ENCODE measurements at regions of chr1 and their contacts with region 1.

Region 1: DNA sequence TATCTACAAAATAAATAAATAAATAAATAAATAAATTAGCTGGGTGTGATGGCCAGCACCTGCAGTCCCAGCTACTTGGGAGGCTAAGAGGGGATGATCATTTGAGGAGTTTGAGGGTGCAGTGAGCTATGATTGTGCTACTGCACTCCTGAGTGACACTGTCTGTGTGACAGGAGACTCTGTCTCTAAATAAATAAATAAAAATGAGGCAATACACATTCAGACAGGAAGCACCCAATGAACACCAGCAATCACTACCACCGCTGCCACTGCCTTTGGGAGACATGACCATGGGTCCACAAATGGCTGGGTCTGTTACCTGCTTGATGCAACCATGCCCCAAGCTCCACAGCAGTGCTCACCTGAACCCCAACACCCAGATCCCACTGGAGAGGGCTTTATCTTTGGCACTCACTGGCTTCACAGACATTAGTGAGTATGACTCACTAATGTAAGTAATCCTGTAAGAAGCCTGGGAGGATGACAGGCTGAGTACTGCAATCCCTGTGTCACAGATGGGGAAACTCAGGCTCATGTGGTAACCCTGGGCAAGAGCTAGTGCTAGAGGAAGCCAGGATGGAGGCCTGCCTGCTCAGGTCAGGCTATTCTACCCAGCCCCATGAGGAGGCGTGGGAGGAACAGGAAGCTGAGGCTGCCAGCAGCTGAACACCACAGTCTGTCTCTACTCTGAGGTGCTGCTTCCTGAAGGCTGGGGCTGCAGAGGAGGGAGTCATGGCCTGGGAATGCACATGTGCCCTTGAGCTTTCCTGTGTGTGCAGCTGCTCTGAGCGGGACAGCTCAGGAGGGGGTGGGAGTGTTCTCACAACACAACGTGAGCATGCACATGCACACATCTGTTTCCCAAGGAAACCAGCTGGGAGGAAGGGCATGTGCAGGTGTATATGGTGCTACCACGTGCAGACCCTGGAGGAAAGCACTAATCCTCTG is 43.0 kb downstream of the SLC9A1 start:
- DNase-seq: peak; percentile 41 to 87 (median 72)
- ATAC-seq: peak; percentile 96
- H3K4me3 ChIP-seq: no peak overlapping the region
- H3K4me3 Mint-ChIP-seq: peak overlapping the region; percentile 69
- H3K27ac ChIP-seq: peak overlapping the region; percentile 1 to 78
- H3K27ac Mint-ChIP-seq: peak overlapping the region; percentile 92
- H3K4me1 ChIP-seq: peaks cover 45% of the 10 kb centered on the region
- H3K4me1 Mint-ChIP-seq: peaks cover 64% of the 10 kb centered on the region
- H3K27me3 ChIP-seq: no peaks in the 10 kb centered on the region
- H3K27me3 Mint-ChIP-seq: no peaks in the 10 kb centered on the region
- CTCF ChIP-seq: peak; percentile 49

Region 2: DNA sequence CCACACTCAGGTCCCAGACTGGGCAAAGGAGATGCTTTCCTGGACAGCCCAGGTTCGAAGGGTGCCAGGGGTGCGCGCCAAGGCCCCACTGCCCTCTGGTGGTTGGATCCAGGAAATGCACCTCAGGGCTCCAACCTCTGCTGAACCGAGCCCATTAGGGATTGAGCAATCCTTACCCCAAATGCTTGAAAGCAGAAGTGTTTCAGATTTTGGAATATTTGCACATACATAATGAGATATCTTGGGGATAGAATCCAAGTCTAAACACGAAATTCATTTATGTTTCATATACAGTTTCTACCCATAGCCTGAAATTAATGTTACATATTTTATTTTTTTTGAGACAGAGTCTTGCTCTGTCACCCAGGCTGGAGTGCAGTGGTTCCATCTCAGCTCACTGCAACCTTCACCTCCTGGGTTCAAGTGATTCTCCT is 14.4 kb before region 1 on chr1:
- CTCF ChIA-PET with region 1: interaction called, 38 read pairs
- POLR2A ChIA-PET with region 1: no interaction called
- intact Hi-C with region 1: no loop called
- DNase-seq: peak; percentile 47 to 83 (median 73)
- ATAC-seq: peak; percentile 100
- H3K4me3 ChIP-seq: no peak overlapping the region
- H3K4me3 Mint-ChIP-seq: no peak overlapping the region
- H3K27ac ChIP-seq: no peak overlapping the region
- H3K27ac Mint-ChIP-seq: no peak overlapping the region
- H3K4me1 ChIP-seq: no peaks in the 10 kb centered on the region
- H3K4me1 Mint-ChIP-seq: peaks cover 3% of the 10 kb centered on the region
- H3K27me3 ChIP-seq: no peaks in the 10 kb centered on the region
- H3K27me3 Mint-ChIP-seq: no peaks in the 10 kb centered on the region
- CTCF ChIP-seq: peak; percentile 90

Region 3: DNA sequence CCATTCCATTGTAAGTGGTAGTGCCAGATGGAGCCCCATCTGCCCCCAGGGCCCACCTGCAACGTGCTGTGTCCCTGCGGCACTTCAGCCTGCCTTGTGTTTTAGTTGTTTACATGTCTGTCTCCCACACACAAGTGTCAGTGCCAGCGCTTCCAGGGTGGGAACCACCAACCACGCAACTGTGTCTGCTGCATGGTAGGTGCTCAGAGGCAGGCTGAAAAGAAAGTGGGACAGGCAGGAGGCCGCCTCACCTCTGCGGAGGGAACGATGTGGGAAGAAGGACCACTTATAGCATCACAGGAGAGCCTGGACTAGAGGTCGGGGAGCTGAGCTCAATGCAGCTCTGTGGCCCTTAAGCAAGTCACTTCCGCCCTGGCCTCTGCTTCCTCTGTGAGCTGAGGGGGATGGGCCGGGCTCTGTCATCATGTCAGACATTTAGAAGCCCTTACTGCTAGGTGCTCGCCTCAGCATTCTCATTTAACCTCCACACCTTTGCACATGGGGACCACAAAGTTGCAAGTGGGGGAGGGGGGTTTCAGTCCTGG is 25.2 kb after region 1 on chr1:
- CTCF ChIA-PET with region 1: interaction called, 6 read pairs
- POLR2A ChIA-PET with region 1: interaction called, 14 read pairs
- intact Hi-C with region 1: no loop called
- DNase-seq: peak; percentile 58 to 91 (median 81)
- ATAC-seq: peak; percentile 95
- H3K4me3 ChIP-seq: peak overlapping the region; percentile 41 to 45
- H3K4me3 Mint-ChIP-seq: peak overlapping the region; percentile 87
- H3K27ac ChIP-seq: peak overlapping the region; percentile 72 to 97
- H3K27ac Mint-ChIP-seq: peak overlapping the region; percentile 100
- H3K4me1 ChIP-seq: peaks cover 42% of the 10 kb centered on the region
- H3K4me1 Mint-ChIP-seq: peaks cover 61% of the 10 kb centered on the region
- H3K27me3 ChIP-seq: no peaks in the 10 kb centered on the region
- H3K27me3 Mint-ChIP-seq: no peaks in the 10 kb centered on the region
- CTCF ChIP-seq: no peak

Region 4: GRCh38 chr1:27154991-27155781 is 43.3 kb after region 1 on chr1 and contains the start of gene SLC9A1:
- CTCF ChIA-PET with region 1: interaction called, 30 read pairs
- POLR2A ChIA-PET with region 1: interaction called, 31 read pairs
- intact Hi-C with region 1: loop called (anchors 1 kb)
- DNase-seq: peak; percentile 88 to 96 (median 91)
- ATAC-seq: peak; percentile 94
- H3K4me3 ChIP-seq: peak within 1 kb of the TSS; percentile 75 to 83
- H3K4me3 Mint-ChIP-seq: peak within 1 kb of the TSS; percentile 81
- H3K27ac ChIP-seq: peak within 1 kb of the TSS; percentile 92 to 100
- H3K27ac Mint-ChIP-seq: peak within 1 kb of the TSS; percentile 99
- H3K4me1 ChIP-seq: peaks cover 40% of the 10 kb centered on the region
- H3K4me1 Mint-ChIP-seq: peaks cover 45% of the 10 kb centered on the region
- H3K27me3 ChIP-seq: no peaks in the 10 kb centered on the region
- H3K27me3 Mint-ChIP-seq: no peaks in the 10 kb centered on the region
- CTCF ChIP-seq: peak; percentile 82
- total RNA-seq, gene SLC9A1: 17.9 to 18.3 TPM

Region 5: DNA sequence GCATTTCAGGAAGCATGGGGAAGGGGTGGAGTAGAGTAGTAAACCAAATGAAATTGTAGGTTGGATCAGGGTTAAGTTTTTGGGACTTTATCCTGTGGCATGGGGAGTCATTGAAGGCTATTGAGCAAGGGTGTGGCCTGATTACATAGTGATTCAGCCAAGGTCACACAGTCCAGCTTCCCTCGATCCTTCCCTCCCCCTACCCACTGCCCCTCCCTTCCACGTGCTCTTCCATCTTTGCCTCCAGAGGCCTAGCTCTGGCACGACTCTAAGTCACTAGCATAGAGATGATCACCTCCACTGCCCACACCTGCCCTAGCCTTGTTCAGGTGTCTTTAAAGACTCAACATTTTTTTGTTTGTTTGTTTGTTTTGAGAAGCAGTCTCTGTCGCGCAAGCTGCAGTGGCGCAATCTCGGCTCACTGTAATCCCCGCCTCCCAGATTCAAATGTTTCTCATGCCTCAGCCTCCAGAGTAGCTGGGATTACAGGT is 80.2 kb after region 1 on chr1:
- CTCF ChIA-PET with region 1: interaction called, 40 read pairs
- POLR2A ChIA-PET with region 1: interaction called, 4 read pairs
- intact Hi-C with region 1: no loop called
- DNase-seq: no peak
- ATAC-seq: no peak
- H3K4me3 ChIP-seq: no peak overlapping the region
- H3K4me3 Mint-ChIP-seq: no peak overlapping the region
- H3K27ac ChIP-seq: no peak overlapping the region
- H3K27ac Mint-ChIP-seq: no peak overlapping the region
- H3K4me1 ChIP-seq: no peaks in the 10 kb centered on the region
- H3K4me1 Mint-ChIP-seq: no peaks in the 10 kb centered on the region
- H3K27me3 ChIP-seq: no peaks in the 10 kb centered on the region
- H3K27me3 Mint-ChIP-seq: no peaks in the 10 kb centered on the region
- CTCF ChIP-seq: no peak

Region 6: DNA sequence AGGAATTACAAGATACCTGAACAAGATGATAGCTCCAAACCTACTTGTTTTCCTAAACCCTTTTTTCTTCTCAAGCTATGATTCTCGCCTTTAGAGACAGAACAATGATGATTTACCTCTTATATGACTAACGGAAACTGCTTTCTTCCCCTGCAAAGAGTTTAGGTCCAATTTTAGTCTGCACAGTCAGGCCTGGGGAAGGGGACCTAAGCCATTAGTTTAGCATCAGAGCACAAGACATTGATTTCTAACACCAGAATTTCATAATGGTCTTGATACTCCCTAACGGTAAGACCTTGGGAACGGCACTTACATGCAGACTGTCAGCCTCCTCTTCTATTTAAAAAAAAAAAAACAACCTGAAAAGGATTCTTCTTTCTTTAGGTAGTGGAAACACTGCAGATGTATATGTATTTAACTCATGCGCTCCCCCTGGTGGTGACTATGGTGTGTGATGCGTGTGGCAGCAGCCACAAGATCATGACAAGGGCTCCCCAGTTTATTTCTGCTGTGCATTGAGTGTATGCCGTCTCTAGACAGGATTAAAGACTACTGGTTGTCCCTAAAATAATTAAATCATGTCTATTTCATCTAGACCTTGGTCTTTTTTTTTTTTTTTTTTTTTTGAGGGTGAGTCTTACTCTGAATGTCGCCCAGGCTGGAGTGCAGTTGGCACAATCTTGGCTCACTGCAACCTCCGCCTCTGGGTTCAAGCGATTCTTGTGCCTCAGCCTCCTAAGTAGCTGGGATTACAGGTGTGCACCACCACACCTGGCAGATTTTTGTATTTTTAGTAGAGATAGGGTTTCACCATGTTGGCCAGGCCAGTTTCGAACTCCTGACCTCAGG is 172.7 kb after region 1 on chr1:
- CTCF ChIA-PET with region 1: interaction called, 189 read pairs
- POLR2A ChIA-PET with region 1: interaction called, 3 read pairs
- intact Hi-C with region 1: loop called in 1 of 2 experiments (anchors 1 kb)
- DNase-seq: peak; percentile 79 to 94 (median 88)
- ATAC-seq: peak; percentile 98
- H3K4me3 ChIP-seq: no peak overlapping the region
- H3K4me3 Mint-ChIP-seq: no peak overlapping the region
- H3K27ac ChIP-seq: no peak overlapping the region
- H3K27ac Mint-ChIP-seq: no peak overlapping the region
- H3K4me1 ChIP-seq: no peaks in the 10 kb centered on the region
- H3K4me1 Mint-ChIP-seq: peaks cover 5% of the 10 kb centered on the region
- H3K27me3 ChIP-seq: no peaks in the 10 kb centered on the region
- H3K27me3 Mint-ChIP-seq: no peaks in the 10 kb centered on the region
- CTCF ChIP-seq: peak; percentile 87

Measured in CD8-positive, alpha-beta T cell (primary cell).